ENCODE measurements at regions of chr12 and their contacts with region 1.

Region 1: GRCh38 chr12:25041006-25041741 is 92.3 kb upstream of the BCAT1 start:
- DNase-seq: no peak
- CTCF ChIP-seq: no peak

Region 2: DNA sequence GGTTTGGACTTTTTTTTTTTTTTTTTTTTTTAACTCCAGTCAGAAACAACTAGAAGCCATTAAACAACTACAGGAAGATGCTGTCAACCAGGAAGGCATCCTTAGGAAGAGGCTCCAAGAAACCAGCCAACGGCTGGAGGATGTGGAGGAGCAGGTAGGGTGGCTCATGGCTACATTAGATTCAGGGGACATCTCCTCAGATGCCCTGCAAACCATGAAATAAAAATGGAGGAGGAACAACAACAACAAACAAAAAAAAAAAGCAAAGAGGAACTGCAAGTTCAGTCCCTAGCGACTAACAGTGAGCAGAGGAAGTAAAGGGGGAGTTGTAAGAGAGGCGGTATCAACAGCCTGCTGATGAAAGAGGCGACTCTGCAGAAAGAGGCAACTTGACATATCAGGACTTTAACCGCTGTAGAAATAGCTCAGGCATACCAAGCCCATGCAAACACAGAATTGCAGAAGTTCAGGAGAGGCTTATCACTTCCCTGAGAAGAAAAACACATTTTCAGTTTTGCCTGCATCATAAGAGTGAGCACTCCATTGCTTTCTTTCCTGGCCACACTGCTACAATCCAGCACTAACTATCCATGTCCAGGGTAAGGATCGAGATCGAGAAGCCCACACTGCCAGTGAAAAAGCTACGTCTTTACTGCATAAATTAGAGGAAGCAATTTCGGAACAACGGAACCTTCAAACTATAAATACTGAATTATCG is 11.2 kb after region 1 on chr12:
- CTCF ChIA-PET with region 1: interaction called, 10 read pairs
- POLR2A ChIA-PET with region 1: interaction called, 3 read pairs
- DNase-seq: peak; percentile 60
- CTCF ChIP-seq: no peak

Measured in GM10248 (cell line).